Right ventricle myocardium inferior (tissue), 1 donor: ENCODE measurements at regions of chr9 and their contacts with region 1.

Region 1: GRCh38 chr9:137605121-137606004 is at the start of gene ARRDC1:
- DNase-seq: peak; percentile 97
- ATAC-seq: peak; percentile 88
- total RNA-seq, gene ARRDC1: 17.5 TPM

Region 2: GRCh38 chr9:137578518-137579258 is 26.7 kb before region 1 on chr9 and contains the start of gene DPH7:
- intact Hi-C with region 1: loop called (anchors 2 kb)
- DNase-seq: peak; percentile 99
- ATAC-seq: peak; percentile 94
- total RNA-seq, gene DPH7: 17.2 TPM

Region 3: GRCh38 chr9:137618105-137619067 is 13.0 kb after region 1 on chr9 and contains the start of gene EHMT1:
- intact Hi-C with region 1: loop called (anchors 1 kb)
- DNase-seq: peak; percentile 92
- ATAC-seq: peak; percentile 92
- total RNA-seq, gene EHMT1: 30.5 TPM